Endothelial cell of umbilical vein (primary cell): ENCODE measurements at regions of chr5 and their contacts with region 1.

Region 1: GRCh38 chr5:135466178-135467050 is 14.3 kb upstream of the TIFAB start:
- DNase-seq: peak; percentile 62
- H3K4me3 ChIP-seq: no peak overlapping the region
- H3K27ac ChIP-seq: no peak overlapping the region
- H3K4me1 ChIP-seq: peaks cover 3% of the 10 kb centered on the region
- H3K27me3 ChIP-seq: peaks cover 38 to 50% of the 10 kb centered on the region in 2 experiments
- CTCF ChIP-seq: peak; percentile 84 to 94
- POLR2A ChIP-seq: no peak

Region 2: DNA sequence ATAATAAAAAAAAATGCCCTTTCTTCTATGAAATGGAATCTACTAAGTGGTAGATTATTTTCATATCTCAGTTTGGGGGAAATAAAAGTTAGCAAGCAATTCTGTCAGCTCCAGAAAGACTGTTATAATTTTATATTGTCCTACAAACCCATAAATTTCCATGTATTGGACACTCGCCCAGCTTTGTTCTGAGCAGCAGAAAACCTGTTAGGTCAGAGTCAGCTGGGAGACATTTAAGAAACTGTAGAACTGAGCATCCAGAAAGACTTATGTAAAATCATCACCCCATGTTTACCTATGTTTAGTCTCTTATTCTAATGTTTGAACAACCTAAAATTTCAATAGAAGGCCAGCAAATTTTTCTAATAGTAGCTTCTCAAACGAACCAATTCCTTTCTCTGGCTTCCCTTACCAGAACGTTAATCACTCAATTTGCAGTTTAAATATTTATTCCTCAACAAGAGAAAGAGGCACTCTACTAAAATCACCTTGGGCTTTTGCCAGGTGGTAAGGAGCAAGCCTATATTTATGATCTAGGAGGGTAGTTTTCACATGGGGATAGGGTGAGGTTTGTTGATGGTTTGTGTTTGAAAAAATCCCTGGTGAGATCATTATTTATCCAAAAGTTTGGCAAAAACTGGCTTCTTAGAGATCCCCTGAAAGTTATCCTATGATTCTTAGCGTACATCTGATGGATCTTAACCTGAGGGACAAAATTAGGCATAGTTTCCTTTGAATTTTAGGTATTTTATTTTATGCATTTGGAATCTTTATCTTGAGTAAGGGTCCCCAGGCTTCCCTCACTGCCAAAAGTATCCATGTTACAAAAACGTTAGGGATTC is 101.8 kb before region 1 on chr5:
- CTCF ChIA-PET with region 1: no interaction called
- POLR2A ChIA-PET with region 1: no interaction called
- dilution Hi-C with region 1: no loop called
- intact Hi-C with region 1: no loop called
- DNase-seq: peak; percentile 20
- H3K4me3 ChIP-seq: no peak overlapping the region
- H3K27ac ChIP-seq: no peak overlapping the region
- H3K4me1 ChIP-seq: no peaks in the 10 kb centered on the region
- H3K27me3 ChIP-seq: no peaks in the 10 kb centered on the region
- CTCF ChIP-seq: no peak
- POLR2A ChIP-seq: no peak

Region 3: GRCh38 chr5:135437796-135438560 is 28.4 kb before region 1 on chr5:
- CTCF ChIA-PET with region 1: interaction called, 14 read pairs
- POLR2A ChIA-PET with region 1: no interaction called
- dilution Hi-C with region 1: no loop called
- intact Hi-C with region 1: no loop called
- DNase-seq: no peak
- H3K4me3 ChIP-seq: no peak overlapping the region
- H3K27ac ChIP-seq: no peak overlapping the region
- H3K4me1 ChIP-seq: no peaks in the 10 kb centered on the region
- H3K27me3 ChIP-seq: peaks cover 5 to 25% of the 10 kb centered on the region in 2 experiments
- CTCF ChIP-seq: no peak
- POLR2A ChIP-seq: no peak

Region 4: DNA sequence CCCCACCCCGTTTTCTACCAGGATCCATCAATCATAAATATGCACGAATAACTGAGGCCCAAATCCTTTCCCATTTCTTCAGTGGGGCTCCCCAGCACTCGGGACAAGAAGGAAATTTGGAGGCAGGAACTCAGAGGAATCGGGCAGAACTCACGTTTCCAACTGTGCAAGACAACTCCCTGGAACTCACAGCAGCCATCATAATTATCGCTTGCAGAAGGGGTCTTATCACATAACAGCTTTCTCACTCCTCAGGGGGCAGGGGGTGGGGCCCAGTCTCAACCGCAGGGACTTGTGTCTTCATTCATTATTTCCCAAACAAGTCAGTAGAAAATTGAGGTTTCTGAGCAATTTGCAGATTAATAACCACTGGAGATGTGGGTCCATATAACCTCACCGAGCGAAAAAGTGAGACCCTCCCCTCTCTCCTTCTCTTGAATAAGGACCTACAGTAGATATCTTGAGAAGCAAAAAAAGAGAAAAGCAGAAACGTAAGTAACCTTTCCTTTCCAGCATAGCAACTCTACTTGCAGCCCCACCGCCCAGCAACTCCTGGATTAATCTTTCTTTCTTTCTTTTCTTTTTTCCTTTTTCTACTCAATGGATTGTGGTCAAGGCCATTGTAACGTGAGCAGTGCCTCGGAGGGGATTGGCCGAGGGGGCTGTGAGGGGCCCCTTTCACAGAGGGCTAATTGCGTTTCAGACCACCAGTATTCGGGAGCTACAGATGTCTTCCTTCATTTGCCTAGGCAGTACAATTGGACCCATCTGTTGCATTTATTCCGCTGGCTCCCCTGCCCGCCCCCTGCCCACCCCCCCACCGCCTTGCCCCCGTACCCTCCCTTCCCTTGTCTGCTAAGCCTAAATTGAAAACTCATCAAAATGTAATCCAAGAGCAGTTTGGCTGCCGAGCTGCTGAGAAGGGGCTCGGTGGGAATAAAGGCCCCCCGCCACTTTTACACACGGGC is 10.5 kb after region 1 on chr5:
- CTCF ChIA-PET with region 1: interaction called, 61 read pairs
- POLR2A ChIA-PET with region 1: no interaction called
- dilution Hi-C with region 1: no loop called
- intact Hi-C with region 1: no loop called
- DNase-seq: no peak
- H3K4me3 ChIP-seq: no peak overlapping the region
- H3K27ac ChIP-seq: no peak overlapping the region
- H3K4me1 ChIP-seq: no peaks in the 10 kb centered on the region
- H3K27me3 ChIP-seq: peaks cover 28 to 40% of the 10 kb centered on the region in 2 experiments
- CTCF ChIP-seq: no peak
- POLR2A ChIP-seq: no peak

Region 5: GRCh38 chr5:135508482-135509005 is 42.1 kb after region 1 on chr5:
- CTCF ChIA-PET with region 1: interaction called, 17 read pairs
- POLR2A ChIA-PET with region 1: no interaction called
- dilution Hi-C with region 1: no loop called
- intact Hi-C with region 1: no loop called
- DNase-seq: no peak
- H3K4me3 ChIP-seq: no peak overlapping the region
- H3K27ac ChIP-seq: no peak overlapping the region
- H3K4me1 ChIP-seq: no peaks in the 10 kb centered on the region
- H3K27me3 ChIP-seq: peaks cover 14 to 28% of the 10 kb centered on the region in 2 experiments
- CTCF ChIP-seq: no peak
- POLR2A ChIP-seq: no peak

Region 6: GRCh38 chr5:135551593-135552447 is 85.4 kb after region 1 on chr5:
- CTCF ChIA-PET with region 1: interaction called, 661 read pairs
- POLR2A ChIA-PET with region 1: no interaction called
- dilution Hi-C with region 1: loop called (anchors 25 kb)
- intact Hi-C with region 1: loop called (anchors 1 kb)
- DNase-seq: peak; percentile 71
- H3K4me3 ChIP-seq: no peak overlapping the region
- H3K27ac ChIP-seq: no peak overlapping the region
- H3K4me1 ChIP-seq: no peaks in the 10 kb centered on the region
- H3K27me3 ChIP-seq: peaks cover 34 to 46% of the 10 kb centered on the region in 2 experiments
- CTCF ChIP-seq: peak; percentile 74 to 83
- POLR2A ChIP-seq: no peak

Region 7: GRCh38 chr5:135565725-135566421 is 99.5 kb after region 1 on chr5:
- CTCF ChIA-PET with region 1: interaction called, 664 read pairs
- POLR2A ChIA-PET with region 1: no interaction called
- dilution Hi-C with region 1: loop called (anchors 25 kb)
- intact Hi-C with region 1: loop called (anchors 1 kb)
- DNase-seq: peak; percentile 54
- H3K4me3 ChIP-seq: no peak overlapping the region
- H3K27ac ChIP-seq: no peak overlapping the region
- H3K4me1 ChIP-seq: no peaks in the 10 kb centered on the region
- H3K27me3 ChIP-seq: peaks cover 8 to 10% of the 10 kb centered on the region in 2 experiments
- CTCF ChIP-seq: peak; percentile 90 to 93
- POLR2A ChIP-seq: no peak